Mammary epithelial cell (primary cell): ENCODE measurements at regions of chr13 and their contacts with region 1.

Region 1: DNA sequence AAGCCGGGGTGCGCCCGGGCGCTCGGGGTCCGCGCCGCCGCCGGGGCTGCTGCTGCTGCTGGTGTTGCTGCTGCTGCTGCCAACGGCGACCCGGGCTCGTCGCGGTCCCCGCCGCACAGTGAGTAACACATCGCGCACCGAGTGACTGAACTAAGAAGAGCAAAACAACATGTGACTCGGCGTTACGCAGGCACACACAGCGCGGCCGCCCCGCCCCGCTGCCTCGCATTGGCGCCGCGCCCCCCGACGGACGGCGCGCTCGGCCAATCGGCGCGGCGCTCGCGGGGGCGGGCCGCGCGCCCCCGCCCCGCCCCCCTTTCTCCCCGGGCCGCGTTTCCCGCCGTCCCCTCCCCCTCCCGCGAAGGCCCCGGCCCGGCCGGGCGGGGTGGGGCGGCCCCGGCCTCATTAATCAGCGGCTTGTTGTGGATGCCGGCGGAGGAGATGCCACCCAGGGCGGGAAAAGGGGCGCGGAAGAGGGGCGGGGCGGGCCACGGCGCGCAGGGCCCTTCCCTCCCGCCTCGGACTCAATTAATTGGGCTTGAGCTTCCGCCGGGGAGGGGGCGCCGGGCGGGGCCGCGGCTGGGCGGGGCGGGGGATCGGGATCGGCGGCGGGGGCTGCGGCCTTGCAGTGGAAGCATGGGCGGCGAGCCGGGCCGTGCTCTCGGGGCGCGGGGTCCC is at the start of gene IRS2:
- DNase-seq: peak; percentile 90
- H3K4me3 ChIP-seq: peak within 1 kb of the TSS; percentile 81
- H3K27ac ChIP-seq: peak within 1 kb of the TSS; percentile 78
- H3K4me1 ChIP-seq: peaks cover 41% of the 10 kb centered on the region
- H3K27me3 ChIP-seq: no peaks in the 10 kb centered on the region
- CTCF ChIP-seq: no peak
- total RNA-seq, gene IRS2: 22.7 to 37.8 TPM

Region 2: DNA sequence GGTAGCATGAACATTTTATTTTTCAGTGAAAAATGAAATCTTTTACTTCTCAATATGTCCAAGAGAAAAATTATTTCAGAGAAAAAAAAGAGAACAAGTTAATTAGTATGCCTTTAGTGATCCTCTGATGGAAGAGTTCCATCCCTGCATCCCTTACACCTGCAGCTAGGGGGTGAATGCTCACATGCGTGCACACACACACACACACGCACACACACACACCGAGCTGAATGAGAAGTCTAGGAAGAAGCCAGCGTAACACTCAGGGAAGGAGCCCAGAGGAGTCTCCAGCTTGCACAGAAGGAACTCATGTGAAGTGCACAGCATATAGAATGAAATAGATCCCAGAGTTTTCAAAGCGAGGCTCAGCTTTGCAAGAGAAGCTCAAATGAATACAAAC is 510.7 kb before region 1 on chr13:
- CTCF ChIA-PET with region 1: no interaction called
- dilution Hi-C with region 1: no loop called
- in situ Hi-C with region 1: loop called in 1 of 2 experiments (anchors 25 kb)
- intact Hi-C with region 1: loop called (anchors 2 kb)
- DNase-seq: peak; percentile 40
- H3K4me3 ChIP-seq: no peak overlapping the region
- H3K27ac ChIP-seq: no peak overlapping the region
- H3K4me1 ChIP-seq: peaks cover 26% of the 10 kb centered on the region
- H3K27me3 ChIP-seq: no peaks in the 10 kb centered on the region
- CTCF ChIP-seq: peak; percentile 39 to 52

Region 3: DNA sequence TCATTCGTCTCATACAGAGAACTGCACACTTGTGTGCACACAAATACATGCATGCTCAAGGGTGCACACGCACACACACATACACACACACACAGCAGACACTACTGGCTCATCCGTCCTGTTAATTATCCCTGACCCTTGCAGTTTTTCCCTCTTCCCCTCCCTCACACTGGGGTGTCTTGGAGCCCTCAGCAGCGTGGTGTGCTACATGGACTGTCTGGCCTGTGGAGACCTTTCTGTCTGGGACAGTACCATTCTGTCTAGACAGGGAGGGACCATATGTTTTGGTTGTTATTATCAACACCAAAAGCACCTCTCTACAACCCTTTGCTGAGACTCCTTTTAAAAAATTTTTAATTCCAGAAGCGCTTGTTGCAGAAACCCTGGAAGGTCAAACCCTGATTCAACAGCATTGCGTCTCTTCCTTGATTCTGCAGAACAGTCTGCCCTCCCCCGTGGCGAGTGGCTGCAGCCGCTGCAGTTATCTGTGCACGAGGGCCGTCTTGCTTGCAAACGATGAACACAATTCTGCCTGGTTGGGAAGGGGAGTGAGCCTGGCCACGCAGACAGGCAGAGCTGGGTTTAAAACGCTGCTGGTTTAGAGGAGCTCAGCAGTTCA is 374.2 kb before region 1 on chr13:
- CTCF ChIA-PET with region 1: no interaction called
- dilution Hi-C with region 1: no loop called
- in situ Hi-C with region 1: no loop called
- intact Hi-C with region 1: no loop called
- DNase-seq: no peak
- H3K4me3 ChIP-seq: no peak overlapping the region
- H3K27ac ChIP-seq: no peak overlapping the region
- H3K4me1 ChIP-seq: no peaks in the 10 kb centered on the region
- H3K27me3 ChIP-seq: no peaks in the 10 kb centered on the region
- CTCF ChIP-seq: no peak

Region 4: GRCh38 chr13:109454167-109454917 is 332.3 kb before region 1 on chr13:
- CTCF ChIA-PET with region 1: no interaction called
- dilution Hi-C with region 1: no loop called
- in situ Hi-C with region 1: no loop called
- intact Hi-C with region 1: no loop called
- DNase-seq: no peak
- H3K4me3 ChIP-seq: no peak overlapping the region
- H3K27ac ChIP-seq: no peak overlapping the region
- H3K4me1 ChIP-seq: no peaks in the 10 kb centered on the region
- H3K27me3 ChIP-seq: no peaks in the 10 kb centered on the region
- CTCF ChIP-seq: no peak

Region 5: DNA sequence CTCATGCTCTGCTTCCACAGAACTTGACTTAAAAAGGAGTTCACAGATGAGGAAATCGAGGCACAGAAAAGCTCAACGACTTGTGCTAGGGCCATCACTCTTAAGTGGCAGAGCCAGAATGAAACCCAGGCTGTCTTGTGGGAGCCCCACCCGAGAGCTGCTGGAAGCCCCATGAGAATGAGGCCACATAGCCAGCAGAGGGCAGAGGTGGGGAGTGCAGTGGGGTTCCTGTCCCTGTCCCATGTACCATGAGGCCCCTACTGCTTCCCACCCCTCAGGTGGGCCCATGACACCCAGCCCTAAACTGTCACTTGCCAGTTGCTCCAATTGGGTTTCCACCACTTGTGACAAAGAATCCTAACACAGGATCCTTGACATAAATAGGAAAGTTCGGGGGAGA is 176.1 kb before region 1 on chr13:
- CTCF ChIA-PET with region 1: no interaction called
- dilution Hi-C with region 1: no loop called
- in situ Hi-C with region 1: no loop called
- intact Hi-C with region 1: loop called (anchors 2 kb)
- DNase-seq: no peak
- H3K4me3 ChIP-seq: no peak overlapping the region
- H3K27ac ChIP-seq: no peak overlapping the region
- H3K4me1 ChIP-seq: no peaks in the 10 kb centered on the region
- H3K27me3 ChIP-seq: no peaks in the 10 kb centered on the region
- CTCF ChIP-seq: peak; percentile 22 to 51

Region 6: DNA sequence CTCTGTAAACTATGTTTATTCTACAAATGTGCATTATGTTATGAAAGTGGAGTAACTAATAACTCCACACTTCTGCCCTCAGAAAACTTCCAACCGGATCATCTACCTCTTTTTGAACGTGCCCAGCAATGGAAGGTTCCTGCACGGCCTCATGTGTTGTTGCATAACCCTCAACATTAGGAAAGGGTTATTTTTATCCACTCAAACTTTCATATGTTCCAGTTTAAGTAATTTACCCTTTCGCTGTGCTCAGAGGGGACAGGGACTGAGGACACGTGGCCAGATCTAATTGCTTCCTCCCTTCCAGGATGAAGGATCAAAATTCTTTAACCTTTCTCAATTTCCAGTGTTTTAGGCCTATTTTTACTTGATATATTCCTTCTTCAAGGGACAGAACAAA is 29.8 kb before region 1 on chr13:
- CTCF ChIA-PET with region 1: no interaction called
- dilution Hi-C with region 1: no loop called
- in situ Hi-C with region 1: no loop called
- intact Hi-C with region 1: no loop called
- DNase-seq: no peak
- H3K4me3 ChIP-seq: no peak overlapping the region
- H3K27ac ChIP-seq: no peak overlapping the region
- H3K4me1 ChIP-seq: peaks cover 15% of the 10 kb centered on the region
- H3K27me3 ChIP-seq: no peaks in the 10 kb centered on the region
- CTCF ChIP-seq: no peak

Region 7: GRCh38 chr13:109979224-109979623 is 192.6 kb after region 1 on chr13:
- CTCF ChIA-PET with region 1: no interaction called
- dilution Hi-C with region 1: no loop called
- in situ Hi-C with region 1: no loop called
- intact Hi-C with region 1: no loop called
- DNase-seq: peak; percentile 76
- H3K4me3 ChIP-seq: no peak overlapping the region
- H3K27ac ChIP-seq: no peak overlapping the region
- H3K4me1 ChIP-seq: peaks cover 10% of the 10 kb centered on the region
- H3K27me3 ChIP-seq: no peaks in the 10 kb centered on the region
- CTCF ChIP-seq: no peak

Region 8: DNA sequence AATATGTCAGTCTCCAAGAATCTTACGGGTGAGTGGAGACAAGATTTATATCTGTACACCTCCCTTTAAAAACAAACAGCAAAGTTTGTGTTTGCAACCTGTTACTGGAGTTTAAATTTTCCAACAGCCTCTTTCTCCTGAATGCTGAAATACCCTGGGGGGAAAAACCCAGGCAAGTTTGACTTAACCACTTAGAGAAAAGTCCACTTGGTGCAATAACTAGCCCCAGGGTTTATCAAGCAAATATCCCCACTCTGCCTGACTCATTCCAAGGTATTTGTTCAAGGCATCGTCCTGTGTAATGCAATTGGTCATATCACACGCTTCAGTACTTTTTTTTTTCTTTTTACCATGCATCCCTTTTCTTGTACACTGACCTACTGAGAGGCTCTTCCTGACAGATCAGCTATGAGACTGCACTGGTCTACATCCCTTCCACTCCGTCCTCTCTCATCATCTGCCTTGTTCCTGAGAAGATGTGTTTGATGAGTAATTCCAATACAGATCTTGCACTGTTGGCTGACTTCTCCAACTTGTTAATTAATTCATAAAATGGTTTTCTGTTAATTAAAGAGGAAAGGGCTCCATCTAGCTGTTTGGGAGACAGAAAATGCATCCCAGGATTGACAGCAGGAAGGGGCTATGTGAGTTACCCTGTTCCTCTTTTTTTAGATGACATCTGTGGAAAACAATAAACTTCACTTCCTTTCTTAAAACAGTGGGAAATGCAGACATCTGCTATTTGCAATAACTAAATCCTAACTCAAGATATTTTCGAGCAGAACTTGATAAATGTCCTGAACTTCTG is 212.3 kb after region 1 on chr13:
- CTCF ChIA-PET with region 1: no interaction called
- dilution Hi-C with region 1: no loop called
- in situ Hi-C with region 1: no loop called
- intact Hi-C with region 1: loop called (anchors 1 kb)
- DNase-seq: peak; percentile 97
- H3K4me3 ChIP-seq: no peak overlapping the region
- H3K27ac ChIP-seq: peak overlapping the region; percentile 59
- H3K4me1 ChIP-seq: peaks cover 42% of the 10 kb centered on the region
- H3K27me3 ChIP-seq: no peaks in the 10 kb centered on the region
- CTCF ChIP-seq: peak; percentile 8 to 35